Naive thymus-derived CD4-positive, alpha-beta T cell (primary cell): ENCODE measurements at regions of chr7 and their contacts with region 1.

Region 1: DNA sequence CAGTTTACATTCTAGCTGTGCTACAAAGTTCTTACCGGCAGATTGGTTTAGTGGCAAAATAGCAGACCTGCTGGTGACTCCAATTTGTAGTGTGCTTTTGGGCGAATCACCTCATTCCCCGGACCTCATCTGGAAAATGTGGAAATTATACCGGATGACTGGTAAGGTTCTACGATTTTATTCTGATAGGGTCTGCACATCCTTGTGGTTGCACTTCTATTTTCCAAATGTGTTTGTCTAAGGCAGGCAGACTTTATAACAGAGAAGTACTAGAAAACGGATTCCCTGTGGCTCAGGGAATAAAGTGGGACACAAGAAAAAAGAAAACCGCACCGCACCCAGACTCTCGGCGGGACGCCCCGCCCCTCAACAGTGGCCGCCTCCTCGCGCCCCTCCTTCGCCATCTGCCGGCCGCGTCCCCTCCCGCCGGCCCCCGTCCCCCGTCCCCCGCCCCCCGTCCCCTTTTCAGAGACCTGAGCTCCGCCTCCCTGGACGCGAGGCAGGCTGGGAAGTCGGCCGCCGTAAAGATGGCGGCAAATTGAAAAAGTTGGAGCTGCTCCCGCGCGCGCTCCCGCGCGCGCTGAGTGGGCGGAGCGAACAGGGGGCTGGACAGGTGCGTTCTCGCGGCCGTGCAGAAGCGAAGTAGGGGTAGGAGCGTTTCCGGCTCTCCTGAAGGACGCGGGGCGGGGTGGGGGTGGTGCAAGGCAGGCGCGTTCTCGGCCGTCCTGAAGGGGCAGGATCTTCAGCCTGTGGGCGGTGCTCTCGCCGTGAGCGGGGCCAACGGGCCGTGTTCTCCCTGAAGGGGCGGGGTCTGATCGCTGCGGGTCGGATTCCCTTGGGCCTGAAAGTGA is 531 bp upstream of the CCM2 start:
- DNase-seq: peak; percentile 92 to 99 (median 98)
- ATAC-seq: peak; percentile 93
- H3K4me3 ChIP-seq: peak overlapping the region; percentile 83
- H3K4me3 Mint-ChIP-seq: peak overlapping the region; percentile 85 to 100 (median 96)
- H3K27ac ChIP-seq: peak overlapping the region; percentile 80
- H3K27ac Mint-ChIP-seq: peak overlapping the region; percentile 82 to 99 (median 96)
- H3K4me1 ChIP-seq: peaks cover 18 to 34% of the 10 kb centered on the region in 2 donors
- H3K4me1 Mint-ChIP-seq: peaks cover 19 to 59% (median 49%) of the 10 kb centered on the region in 7 donors
- H3K27me3 ChIP-seq: no peaks in the 10 kb centered on the region
- H3K27me3 Mint-ChIP-seq: no peaks in the 10 kb centered on the region

Region 2: GRCh38 chr7:44581879-44582603 is 417.4 kb before region 1 on chr7 and contains the start of gene TMED4:
- CTCF ChIA-PET with region 1: no interaction called
- POLR2A ChIA-PET with region 1: no interaction called
- intact Hi-C with region 1: loop called in 1 of 2 experiments (anchors 2 kb)
- DNase-seq: peak; percentile 100
- ATAC-seq: peak; percentile 96
- H3K4me3 ChIP-seq: peak within 1 kb of the TSS; percentile 95
- H3K4me3 Mint-ChIP-seq: peak within 1 kb of the TSS; percentile 86 to 97 (median 92)
- H3K27ac ChIP-seq: peak within 1 kb of the TSS; percentile 90
- H3K27ac Mint-ChIP-seq: peak within 1 kb of the TSS; percentile 95 to 99 (median 98)
- H3K4me1 ChIP-seq: peaks cover 14 to 19% of the 10 kb centered on the region in 2 donors
- H3K4me1 Mint-ChIP-seq: peaks cover 13 to 43% (median 38%) of the 10 kb centered on the region in 7 donors
- H3K27me3 ChIP-seq: no peaks in the 10 kb centered on the region
- H3K27me3 Mint-ChIP-seq: peaks cover 0 to 12% (median 0%) of the 10 kb centered on the region in 5 donors
- total RNA-seq, gene TMED4: 70.0 to 98.5 (median 95.3) TPM

Region 3: DNA sequence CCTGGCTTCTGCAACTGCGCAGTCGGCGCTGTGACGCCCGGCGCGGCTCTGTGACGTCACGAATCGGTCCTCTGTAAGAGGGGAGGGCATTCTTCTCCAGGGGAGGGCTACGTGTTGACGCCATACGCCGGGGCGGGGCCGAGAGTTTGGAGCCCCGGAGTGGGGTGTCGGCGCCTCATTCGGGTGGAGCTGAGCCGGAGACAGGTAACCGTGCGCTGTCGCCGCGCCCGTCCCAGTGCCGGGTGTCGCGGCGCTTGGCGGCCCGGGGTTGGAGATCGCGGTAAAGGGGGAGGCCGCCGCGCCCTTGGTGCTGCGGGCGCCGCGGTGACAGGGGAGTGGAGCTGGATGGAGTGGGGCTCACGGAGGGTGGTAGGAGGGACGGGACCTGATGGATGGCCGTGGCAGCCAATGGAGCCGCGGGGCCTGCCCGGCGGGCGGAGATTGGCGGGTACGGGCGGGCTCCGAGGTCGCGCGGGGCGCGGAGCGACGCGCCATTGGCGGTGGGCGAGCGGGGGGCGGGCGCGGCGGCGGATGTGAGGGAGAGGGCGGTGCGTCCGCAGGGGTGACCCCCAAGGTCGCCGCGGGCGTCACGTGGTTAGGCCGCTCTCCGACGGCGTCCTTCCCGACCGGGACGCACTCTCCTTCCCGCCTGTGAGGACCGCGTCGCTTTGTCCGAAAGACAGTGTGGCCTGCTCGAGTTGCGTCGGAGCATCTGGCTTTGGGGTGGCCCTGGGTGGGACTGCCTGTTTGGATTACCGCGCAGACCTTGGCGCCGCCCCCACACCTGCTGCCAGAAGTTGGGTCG is 392.8 kb before region 1 on chr7 and contains the start of gene OGDH:
- CTCF ChIA-PET with region 1: no interaction called
- POLR2A ChIA-PET with region 1: no interaction called
- intact Hi-C with region 1: loop called in 1 of 2 experiments (anchors 1 kb)
- DNase-seq: peak; percentile 99 to 100 (median 100)
- ATAC-seq: peak; percentile 95
- H3K4me3 ChIP-seq: peak within 1 kb of the TSS; percentile 71
- H3K4me3 Mint-ChIP-seq: peak within 1 kb of the TSS; percentile 81 to 99 (median 98)
- H3K27ac ChIP-seq: peak within 1 kb of the TSS; percentile 93
- H3K27ac Mint-ChIP-seq: peak within 1 kb of the TSS; percentile 93 to 100 (median 98)
- H3K4me1 ChIP-seq: peaks cover 13 to 17% of the 10 kb centered on the region in 2 donors
- H3K4me1 Mint-ChIP-seq: peaks cover 0 to 45% (median 37%) of the 10 kb centered on the region in 7 donors
- H3K27me3 ChIP-seq: no peaks in the 10 kb centered on the region
- H3K27me3 Mint-ChIP-seq: peaks cover 0 to 20% (median 0%) of the 10 kb centered on the region in 5 donors
- total RNA-seq, gene OGDH: 43.1 to 122 (median 66.3) TPM

Region 4: DNA sequence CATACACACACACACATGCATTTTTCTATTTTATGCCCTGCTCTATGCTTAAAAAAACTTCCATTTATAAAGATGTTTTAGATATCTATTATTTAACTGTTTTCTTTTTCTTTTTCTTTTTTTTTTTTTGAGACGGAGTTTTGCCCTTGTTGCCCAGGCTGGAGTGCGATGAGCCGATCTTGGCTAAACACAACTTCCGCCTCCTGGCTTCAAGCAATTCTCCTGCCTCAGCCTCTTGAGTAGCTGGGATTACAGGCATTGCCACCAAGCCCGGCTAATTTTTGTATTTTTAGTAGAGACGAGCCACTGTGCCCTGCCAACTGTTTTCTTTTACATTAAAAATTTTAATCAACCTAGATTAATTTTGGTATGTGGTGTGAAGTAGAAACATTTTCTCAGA is 68.5 kb before region 1 on chr7:
- CTCF ChIA-PET with region 1: no interaction called
- POLR2A ChIA-PET with region 1: no interaction called
- intact Hi-C with region 1: no loop called
- DNase-seq: no peak
- ATAC-seq: no peak
- H3K4me3 ChIP-seq: no peak overlapping the region
- H3K4me3 Mint-ChIP-seq: no peak overlapping the region
- H3K27ac ChIP-seq: no peak overlapping the region
- H3K27ac Mint-ChIP-seq: no peak overlapping the region
- H3K4me1 ChIP-seq: no peaks in the 10 kb centered on the region
- H3K4me1 Mint-ChIP-seq: peaks cover 0 to 4% (median 0%) of the 10 kb centered on the region in 7 donors
- H3K27me3 ChIP-seq: no peaks in the 10 kb centered on the region
- H3K27me3 Mint-ChIP-seq: peaks cover 0 to 38% (median 5%) of the 10 kb centered on the region in 5 donors

Region 5: GRCh38 chr7:44973610-44974401 is 25.7 kb before region 1 on chr7:
- CTCF ChIA-PET with region 1: interaction called, 63 read pairs
- POLR2A ChIA-PET with region 1: interaction called, 309 read pairs
- intact Hi-C with region 1: loop called (anchors 1 kb)
- DNase-seq: peak in 7 of 9 donors; percentile 52 to 70 (median 66)
- ATAC-seq: peak; percentile 31
- H3K4me3 ChIP-seq: no peak overlapping the region
- H3K4me3 Mint-ChIP-seq: peak overlapping the region in 4 of 10 donors; percentile 5 to 23 (median 10)
- H3K27ac ChIP-seq: peak overlapping the region; percentile 83
- H3K27ac Mint-ChIP-seq: peak overlapping the region in 8 of 9 donors; percentile 18 to 88 (median 67)
- H3K4me1 ChIP-seq: peaks cover 28 to 46% of the 10 kb centered on the region in 2 donors
- H3K4me1 Mint-ChIP-seq: peaks cover 29 to 59% (median 40%) of the 10 kb centered on the region in 7 donors
- H3K27me3 ChIP-seq: no peaks in the 10 kb centered on the region
- H3K27me3 Mint-ChIP-seq: no peaks in the 10 kb centered on the region

Region 6: GRCh38 chr7:44986218-44987053 is 13.0 kb before region 1 on chr7:
- CTCF ChIA-PET with region 1: interaction called, 4 read pairs
- POLR2A ChIA-PET with region 1: interaction called, 309 read pairs
- intact Hi-C with region 1: loop called (anchors 1 kb)
- DNase-seq: peak; percentile 93 to 97 (median 96)
- ATAC-seq: peak; percentile 98
- H3K4me3 ChIP-seq: peak overlapping the region; percentile 92
- H3K4me3 Mint-ChIP-seq: peak overlapping the region; percentile 94 to 100 (median 97)
- H3K27ac ChIP-seq: peak overlapping the region; percentile 97
- H3K27ac Mint-ChIP-seq: peak overlapping the region; percentile 97 to 99 (median 98)
- H3K4me1 ChIP-seq: peaks cover 25 to 33% of the 10 kb centered on the region in 2 donors
- H3K4me1 Mint-ChIP-seq: peaks cover 24 to 66% (median 56%) of the 10 kb centered on the region in 7 donors
- H3K27me3 ChIP-seq: no peaks in the 10 kb centered on the region
- H3K27me3 Mint-ChIP-seq: no peaks in the 10 kb centered on the region

Region 7: DNA sequence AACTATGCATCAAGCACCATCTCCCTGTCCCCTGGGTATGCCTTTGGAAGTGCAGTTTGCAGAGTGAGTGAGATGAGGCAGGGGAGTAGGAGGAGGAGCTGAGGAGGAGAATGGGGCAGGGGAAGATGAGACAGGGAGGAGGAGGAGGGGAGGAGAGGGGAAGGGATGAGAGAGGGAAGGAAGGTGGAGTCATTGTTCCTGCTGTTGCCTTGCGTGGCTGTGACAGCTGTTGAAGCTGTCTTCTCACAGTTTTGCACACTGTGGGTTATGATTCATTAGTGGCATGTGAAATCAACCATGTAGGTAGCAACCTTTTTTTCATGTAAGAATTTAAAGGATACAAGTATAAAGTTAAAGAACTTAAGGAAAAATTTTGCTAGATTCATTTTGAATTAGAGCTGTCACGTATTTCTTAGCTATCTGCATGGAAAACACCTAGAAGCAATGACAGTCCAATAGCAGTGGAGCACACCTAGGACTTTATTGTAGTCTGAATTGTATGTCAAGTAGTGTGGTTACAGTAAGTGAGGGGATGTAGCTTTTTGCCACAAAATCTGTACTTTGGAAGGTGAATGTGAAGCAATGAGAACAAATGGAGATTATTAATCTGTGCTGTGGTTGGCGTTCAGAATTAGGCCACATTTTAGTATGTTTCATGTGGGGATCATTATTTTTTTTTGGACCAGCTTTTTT is 22.3 kb after region 1 on chr7:
- CTCF ChIA-PET with region 1: interaction called, 17 read pairs
- POLR2A ChIA-PET with region 1: interaction called, 348 read pairs
- intact Hi-C with region 1: no loop called
- DNase-seq: no peak
- ATAC-seq: peak; percentile 64
- H3K4me3 ChIP-seq: no peak overlapping the region
- H3K4me3 Mint-ChIP-seq: peak overlapping the region in 8 of 10 donors; percentile 0 to 74 (median 25)
- H3K27ac ChIP-seq: no peak overlapping the region
- H3K27ac Mint-ChIP-seq: peak overlapping the region; percentile 9 to 86 (median 72)
- H3K4me1 ChIP-seq: peaks cover 15 to 24% of the 10 kb centered on the region in 2 donors
- H3K4me1 Mint-ChIP-seq: peaks cover 33 to 73% (median 66%) of the 10 kb centered on the region in 7 donors
- H3K27me3 ChIP-seq: no peaks in the 10 kb centered on the region
- H3K27me3 Mint-ChIP-seq: no peaks in the 10 kb centered on the region

Region 8: DNA sequence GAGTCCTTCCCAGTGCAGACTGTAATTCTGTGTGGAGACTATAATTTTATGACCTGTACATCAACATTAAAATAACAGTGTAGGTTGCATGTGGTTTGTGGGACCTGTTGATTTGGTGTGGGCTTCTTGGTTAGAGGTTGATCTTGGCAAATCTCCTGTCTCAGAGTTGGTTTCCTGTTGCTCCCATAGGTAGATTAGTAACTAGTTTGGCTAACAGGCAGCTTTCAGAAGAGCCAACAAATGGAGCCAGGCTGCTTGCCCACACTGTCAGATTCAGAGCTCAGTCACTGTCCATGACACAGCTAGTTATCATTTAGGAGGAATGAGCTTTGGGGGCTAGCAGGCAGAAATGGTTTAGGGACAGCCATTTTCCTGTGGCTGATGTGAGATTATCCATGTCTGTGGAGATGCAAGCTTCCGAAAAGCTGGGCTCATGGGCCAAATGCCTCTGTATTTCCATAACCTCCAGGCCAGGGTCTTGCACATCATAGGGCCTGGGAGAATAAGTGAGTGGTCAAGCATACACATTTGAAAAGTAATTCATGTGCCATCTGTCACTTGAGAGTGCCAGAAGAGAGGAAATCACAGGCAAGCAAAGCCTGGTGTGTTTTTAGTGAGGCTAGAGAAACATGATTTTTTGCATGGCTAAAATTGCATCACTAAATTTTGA is 33.9 kb after region 1 on chr7:
- CTCF ChIA-PET with region 1: interaction called, 17 read pairs
- POLR2A ChIA-PET with region 1: interaction called, 348 read pairs
- intact Hi-C with region 1: no loop called
- DNase-seq: no peak
- ATAC-seq: peak; percentile 12
- H3K4me3 ChIP-seq: peak overlapping the region; percentile 15
- H3K4me3 Mint-ChIP-seq: peak overlapping the region; percentile 76 to 93 (median 81)
- H3K27ac ChIP-seq: peak overlapping the region; percentile 43
- H3K27ac Mint-ChIP-seq: peak overlapping the region; percentile 48 to 94 (median 84)
- H3K4me1 ChIP-seq: peaks cover 67 to 81% of the 10 kb centered on the region in 2 donors
- H3K4me1 Mint-ChIP-seq: peaks cover 61 to 80% (median 75%) of the 10 kb centered on the region in 7 donors
- H3K27me3 ChIP-seq: no peaks in the 10 kb centered on the region
- H3K27me3 Mint-ChIP-seq: no peaks in the 10 kb centered on the region